Mammary epithelial cell (primary cell): ENCODE measurements at regions of chr11 and their contacts with region 1.

Region 1: DNA sequence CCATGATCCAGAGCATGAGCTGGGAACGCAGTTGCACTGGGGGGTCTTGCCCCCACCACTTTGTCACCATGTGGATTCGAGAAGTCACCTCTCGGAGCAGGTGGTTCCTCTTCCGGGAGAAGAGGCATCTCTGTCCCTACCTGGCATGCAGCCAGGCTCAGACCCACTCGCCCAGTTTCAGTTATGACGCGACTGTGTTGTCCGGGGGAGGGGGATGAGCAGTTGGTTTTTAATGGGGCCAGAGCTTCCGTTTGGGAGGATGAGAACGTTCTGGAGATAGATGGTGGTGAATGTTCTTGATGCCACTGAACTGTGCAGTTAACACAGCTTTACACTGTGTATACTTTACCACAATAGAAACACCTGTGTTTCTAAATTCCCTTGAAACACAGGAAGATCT is 41.5 kb downstream of the DHCR7 start:
- DNase-seq: no peak
- H3K4me3 ChIP-seq: no peak overlapping the region
- H3K27ac ChIP-seq: no peak overlapping the region
- H3K4me1 ChIP-seq: no peaks in the 10 kb centered on the region
- H3K27me3 ChIP-seq: no peaks in the 10 kb centered on the region
- CTCF ChIP-seq: no peak

Region 2: DNA sequence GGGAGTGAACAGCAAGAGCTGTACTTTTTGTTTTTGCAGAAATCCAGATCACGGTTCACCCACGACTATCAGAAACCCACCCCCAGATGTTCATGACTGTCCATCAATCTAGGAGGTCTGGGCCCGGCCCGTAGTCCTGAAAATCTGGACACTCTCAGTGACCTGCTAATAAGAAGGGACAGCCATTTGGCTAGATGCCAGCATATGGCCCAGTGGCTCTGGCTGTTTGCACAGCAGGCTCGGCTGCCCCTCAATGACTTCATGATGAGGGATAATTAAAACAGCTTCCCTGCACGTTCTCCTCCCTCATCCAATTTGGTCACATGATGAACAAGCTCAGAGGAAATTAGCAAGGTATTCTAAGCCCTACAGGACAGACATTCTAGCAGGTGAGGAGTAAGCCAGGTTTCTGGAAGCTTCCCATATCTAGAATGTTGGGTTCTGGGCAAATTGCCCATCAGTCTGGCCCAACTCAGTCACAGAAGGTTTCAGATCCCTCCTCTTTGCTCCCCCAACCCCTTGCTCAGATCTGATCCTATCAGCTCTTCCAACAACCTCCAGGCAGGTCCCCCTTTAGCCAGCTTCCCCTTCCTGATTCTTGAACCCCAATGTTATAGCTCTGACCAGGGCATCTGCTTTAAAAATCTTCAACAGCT is 551.7 kb before region 1 on chr11:
- CTCF ChIA-PET with region 1: no interaction called
- dilution Hi-C with region 1: loop called (anchors 5 kb)
- in situ Hi-C with region 1: no loop called
- intact Hi-C with region 1: no loop called
- DNase-seq: no peak
- H3K4me3 ChIP-seq: no peak overlapping the region
- H3K27ac ChIP-seq: no peak overlapping the region
- H3K4me1 ChIP-seq: no peaks in the 10 kb centered on the region
- H3K27me3 ChIP-seq: no peaks in the 10 kb centered on the region
- CTCF ChIP-seq: no peak

Region 3: GRCh38 chr11:71433648-71434450 is 27.2 kb after region 1 on chr11:
- CTCF ChIA-PET with region 1: no interaction called
- dilution Hi-C with region 1: no loop called
- in situ Hi-C with region 1: no loop called
- intact Hi-C with region 1: no loop called
- DNase-seq: no peak
- H3K4me3 ChIP-seq: no peak overlapping the region
- H3K27ac ChIP-seq: no peak overlapping the region
- H3K4me1 ChIP-seq: no peaks in the 10 kb centered on the region
- H3K27me3 ChIP-seq: no peaks in the 10 kb centered on the region
- CTCF ChIP-seq: no peak

Region 4: GRCh38 chr11:71477641-71478527 is 71.2 kb after region 1 on chr11:
- CTCF ChIA-PET with region 1: no interaction called
- dilution Hi-C with region 1: loop called (anchors 5 kb)
- in situ Hi-C with region 1: no loop called
- intact Hi-C with region 1: no loop called
- DNase-seq: no peak
- H3K4me3 ChIP-seq: no peak overlapping the region
- H3K27ac ChIP-seq: no peak overlapping the region
- H3K4me1 ChIP-seq: no peaks in the 10 kb centered on the region
- H3K27me3 ChIP-seq: no peaks in the 10 kb centered on the region
- CTCF ChIP-seq: no peak

Region 5: GRCh38 chr11:71551711-71552110 is 145.0 kb after region 1 on chr11:
- CTCF ChIA-PET with region 1: no interaction called
- dilution Hi-C with region 1: no loop called
- in situ Hi-C with region 1: no loop called
- intact Hi-C with region 1: no loop called
- DNase-seq: no peak
- H3K4me3 ChIP-seq: no peak overlapping the region
- H3K27ac ChIP-seq: no peak overlapping the region
- H3K4me1 ChIP-seq: no peaks in the 10 kb centered on the region
- H3K27me3 ChIP-seq: peaks cover 3% of the 10 kb centered on the region
- CTCF ChIP-seq: no peak

Region 6: DNA sequence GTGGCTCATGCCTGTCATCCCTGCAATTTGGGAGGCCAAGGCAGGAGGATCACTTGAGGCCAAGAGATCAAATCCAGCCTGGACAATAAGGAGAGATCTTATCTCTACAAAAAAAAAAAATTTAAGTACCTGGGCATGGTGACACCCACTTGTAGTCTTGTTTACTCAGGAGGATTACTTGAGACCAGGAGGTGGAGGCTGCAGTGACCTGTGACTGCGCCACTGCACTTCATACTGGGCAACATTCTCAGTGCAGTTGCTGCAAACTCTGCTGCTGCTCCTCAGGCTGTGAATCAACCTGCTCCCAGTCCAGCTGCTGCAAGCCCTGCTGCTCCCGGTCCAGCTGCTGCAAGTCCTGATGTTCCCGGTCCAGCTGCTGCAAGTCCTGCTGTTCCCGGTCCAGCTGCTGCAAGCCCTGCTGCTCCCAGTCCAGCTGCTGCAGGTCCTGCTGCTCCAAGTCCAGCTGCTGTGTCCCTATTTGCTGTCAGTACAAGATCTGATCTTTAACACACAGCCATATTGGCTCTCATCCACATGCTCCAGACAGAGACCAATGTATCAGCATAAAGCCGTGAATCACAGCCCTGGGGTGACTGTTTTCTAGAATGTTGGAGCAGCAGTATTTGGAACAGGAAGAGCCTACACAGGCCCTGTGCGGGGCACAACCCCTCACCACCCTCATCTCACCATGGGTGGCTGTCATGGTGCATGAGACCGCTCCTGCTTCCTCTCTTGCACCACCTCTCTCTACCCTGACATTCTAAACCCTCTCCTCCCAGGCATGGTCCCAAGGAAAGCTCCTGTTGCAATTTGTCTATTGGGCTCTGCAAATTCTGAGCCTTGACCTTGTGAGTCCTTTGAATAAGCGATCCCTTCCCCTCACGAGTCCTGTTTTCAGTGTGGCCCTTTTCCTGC is 162.0 kb after region 1 on chr11:
- CTCF ChIA-PET with region 1: no interaction called
- dilution Hi-C with region 1: no loop called
- in situ Hi-C with region 1: no loop called
- intact Hi-C with region 1: no loop called
- DNase-seq: no peak
- H3K4me3 ChIP-seq: no peak overlapping the region
- H3K27ac ChIP-seq: no peak overlapping the region
- H3K4me1 ChIP-seq: no peaks in the 10 kb centered on the region
- H3K27me3 ChIP-seq: no peaks in the 10 kb centered on the region
- CTCF ChIP-seq: no peak